Activated CD4-positive, alpha-beta memory T cell treated with anti-CD3 and anti-CD28 coated beads for 36 hours (primary cell): ENCODE measurements at regions of chrX and their contacts with region 1.

Region 1: GRCh38 chrX:119791438-119792231 is at the start of gene RPL39:
- DNase-seq: peak; percentile 86
- H3K4me3 Mint-ChIP-seq: peak within 1 kb of the TSS; percentile 90
- H3K27ac Mint-ChIP-seq: peak within 1 kb of the TSS; percentile 97
- H3K4me1 Mint-ChIP-seq: peaks cover 20% of the 10 kb centered on the region
- H3K27me3 Mint-ChIP-seq: no peaks in the 10 kb centered on the region
- total RNA-seq, gene RPL39: 2,669 to 2,681 TPM

Region 2: DNA sequence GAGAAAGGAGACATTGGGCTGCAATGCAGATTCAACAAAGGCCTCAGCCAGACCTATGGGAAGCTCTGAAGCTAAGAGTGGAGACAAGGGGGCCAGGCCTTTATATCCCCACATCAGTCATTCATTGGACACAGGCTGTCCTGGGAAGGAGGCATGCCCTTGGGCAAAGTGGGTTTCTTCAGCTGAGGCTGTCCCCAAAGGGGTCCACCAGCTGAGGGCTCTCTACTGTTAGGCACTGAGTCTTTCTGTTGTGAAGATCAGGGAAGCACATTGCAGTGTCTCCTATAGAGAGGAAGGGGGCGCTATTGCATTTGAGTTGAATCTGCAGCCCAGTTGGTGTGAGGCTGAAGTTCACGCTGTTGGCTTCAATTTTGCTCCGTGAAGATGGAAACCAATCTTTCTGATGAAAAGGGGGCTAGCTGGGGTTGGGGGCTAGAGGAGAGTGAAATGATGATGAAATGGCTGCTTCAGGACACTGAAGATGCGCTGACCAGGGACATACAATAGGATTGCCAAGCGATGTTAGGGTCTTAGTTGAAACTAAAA is 275.4 kb before region 1 on chrX:
- CTCF ChIA-PET with region 1: interaction called, 3 read pairs
- POLR2A ChIA-PET with region 1: no interaction called
- intact Hi-C with region 1: loop called (anchors 5 kb)
- DNase-seq: peak; percentile 27
- H3K4me3 Mint-ChIP-seq: no peak overlapping the region
- H3K27ac Mint-ChIP-seq: no peak overlapping the region
- H3K4me1 Mint-ChIP-seq: peaks cover 2% of the 10 kb centered on the region
- H3K27me3 Mint-ChIP-seq: no peaks in the 10 kb centered on the region

Region 3: DNA sequence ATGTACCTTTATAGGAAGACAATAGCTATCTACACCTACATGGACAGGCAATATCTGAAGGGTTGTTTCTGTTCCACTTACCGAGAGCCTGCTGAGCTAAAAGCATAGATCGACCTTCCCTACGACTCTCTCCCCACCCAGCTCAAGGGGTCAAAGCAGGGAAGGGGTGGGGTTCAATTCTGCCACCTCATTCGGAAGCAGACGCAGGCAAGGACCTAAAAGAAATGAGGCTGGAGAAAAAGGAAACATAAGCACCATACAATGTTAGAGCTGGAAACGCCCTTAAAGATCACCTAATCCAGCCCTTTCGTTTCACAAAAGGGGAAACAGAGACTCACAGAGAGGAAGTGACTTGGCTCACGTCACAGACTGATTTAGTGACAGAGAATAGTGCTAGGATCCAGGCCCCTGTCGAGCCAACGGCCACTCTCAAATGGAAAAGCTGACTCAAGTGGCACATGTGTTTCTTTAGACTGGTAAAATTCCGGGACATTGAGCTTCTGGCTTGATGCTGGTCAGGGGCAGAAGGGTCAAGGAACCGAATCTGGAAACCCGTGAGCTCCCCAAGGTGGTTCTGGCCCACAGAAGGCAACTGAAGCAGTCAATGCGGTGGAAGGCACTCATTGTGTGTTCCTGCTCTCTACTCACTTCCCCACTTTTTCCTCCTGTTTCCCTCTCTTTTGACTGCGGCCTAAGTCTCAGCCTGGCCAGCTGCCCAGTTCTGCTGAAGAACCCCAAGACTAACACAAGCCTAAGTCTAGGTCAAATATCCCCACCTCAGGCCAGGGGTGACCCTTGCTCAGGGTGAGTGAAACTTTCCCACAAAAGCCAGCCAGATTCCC is 106.2 kb before region 1 on chrX:
- CTCF ChIA-PET with region 1: no interaction called
- POLR2A ChIA-PET with region 1: interaction called, 8 read pairs
- intact Hi-C with region 1: loop called (anchors 2 kb)
- DNase-seq: peak; percentile 73
- H3K4me3 Mint-ChIP-seq: peak overlapping the region; percentile 88
- H3K27ac Mint-ChIP-seq: peak overlapping the region; percentile 99
- H3K4me1 Mint-ChIP-seq: peaks cover 48% of the 10 kb centered on the region
- H3K27me3 Mint-ChIP-seq: no peaks in the 10 kb centered on the region

Region 4: GRCh38 chrX:119721487-119721886 is 70.1 kb before region 1 on chrX:
- CTCF ChIA-PET with region 1: no interaction called
- POLR2A ChIA-PET with region 1: no interaction called
- intact Hi-C with region 1: no loop called
- DNase-seq: no peak
- H3K4me3 Mint-ChIP-seq: no peak overlapping the region
- H3K27ac Mint-ChIP-seq: no peak overlapping the region
- H3K4me1 Mint-ChIP-seq: no peaks in the 10 kb centered on the region
- H3K27me3 Mint-ChIP-seq: no peaks in the 10 kb centered on the region

Region 5: GRCh38 chrX:119753571-119754257 is 37.9 kb before region 1 on chrX:
- CTCF ChIA-PET with region 1: interaction called, 12 read pairs
- POLR2A ChIA-PET with region 1: interaction called, 11 read pairs
- intact Hi-C with region 1: loop called (anchors 1 kb)
- DNase-seq: peak; percentile 54
- H3K4me3 Mint-ChIP-seq: peak overlapping the region; percentile 16
- H3K27ac Mint-ChIP-seq: peak overlapping the region; percentile 90
- H3K4me1 Mint-ChIP-seq: peaks cover 40% of the 10 kb centered on the region
- H3K27me3 Mint-ChIP-seq: no peaks in the 10 kb centered on the region

Region 6: DNA sequence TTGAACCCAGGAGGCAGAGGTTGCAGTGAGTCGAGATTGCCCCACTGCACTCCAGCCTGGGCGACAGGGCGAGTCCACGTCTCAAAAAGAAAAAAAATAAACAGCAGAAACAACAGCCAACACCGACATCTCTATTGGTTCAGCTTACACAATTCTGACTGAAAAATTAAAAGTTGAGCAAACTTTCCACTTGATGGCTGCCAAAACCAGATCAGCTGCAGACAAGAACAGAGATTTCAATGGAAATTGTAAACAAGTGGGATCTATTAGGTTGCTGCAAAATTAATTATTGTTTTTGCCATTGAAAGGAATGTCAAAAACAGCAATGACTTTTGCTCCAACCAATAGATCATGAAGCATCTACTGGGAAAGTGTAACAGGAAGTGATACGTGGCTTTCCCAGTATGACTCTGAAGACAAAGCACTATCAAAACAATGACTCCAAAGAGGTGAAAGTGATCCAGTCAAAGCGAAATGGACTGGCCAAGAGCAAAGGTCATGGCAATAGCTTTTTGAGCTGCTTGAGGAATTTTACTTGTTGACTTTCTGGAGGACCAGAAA is 34.8 kb after region 1 on chrX:
- CTCF ChIA-PET with region 1: interaction called, 3 read pairs
- POLR2A ChIA-PET with region 1: interaction called, 11 read pairs
- intact Hi-C with region 1: loop called (anchors 1 kb)
- DNase-seq: peak; percentile 31
- H3K4me3 Mint-ChIP-seq: no peak overlapping the region
- H3K27ac Mint-ChIP-seq: peak overlapping the region; percentile 18
- H3K4me1 Mint-ChIP-seq: peaks cover 18% of the 10 kb centered on the region
- H3K27me3 Mint-ChIP-seq: no peaks in the 10 kb centered on the region

Region 7: GRCh38 chrX:119871599-119872395 is 80.2 kb after region 1 on chrX and contains the starts of genes NDUFA1 and RNF113A:
- CTCF ChIA-PET with region 1: interaction called, 8 read pairs
- POLR2A ChIA-PET with region 1: interaction called, 29 read pairs
- intact Hi-C with region 1: loop called (anchors 1 kb)
- DNase-seq: peak; percentile 91
- H3K4me3 Mint-ChIP-seq: peak within 1 kb of the TSS; percentile 98
- H3K27ac Mint-ChIP-seq: peak within 1 kb of the TSS; percentile 98
- H3K4me1 Mint-ChIP-seq: peaks cover 10% of the 10 kb centered on the region
- H3K27me3 Mint-ChIP-seq: no peaks in the 10 kb centered on the region
- total RNA-seq, gene NDUFA1: 103 to 104 TPM
- total RNA-seq, gene RNF113A: 23.1 to 26.2 TPM

Region 8: GRCh38 chrX:119887721-119888425 is 96.2 kb after region 1 on chrX:
- CTCF ChIA-PET with region 1: no interaction called
- POLR2A ChIA-PET with region 1: interaction called, 4 read pairs
- intact Hi-C with region 1: loop called (anchors 1 kb)
- DNase-seq: peak; percentile 78
- H3K4me3 Mint-ChIP-seq: peak overlapping the region; percentile 35
- H3K27ac Mint-ChIP-seq: no peak overlapping the region
- H3K4me1 Mint-ChIP-seq: peaks cover 6% of the 10 kb centered on the region
- H3K27me3 Mint-ChIP-seq: no peaks in the 10 kb centered on the region